B cell (primary cell): ENCODE measurements at regions of chr11 and their contacts with region 1.

Region 1: DNA sequence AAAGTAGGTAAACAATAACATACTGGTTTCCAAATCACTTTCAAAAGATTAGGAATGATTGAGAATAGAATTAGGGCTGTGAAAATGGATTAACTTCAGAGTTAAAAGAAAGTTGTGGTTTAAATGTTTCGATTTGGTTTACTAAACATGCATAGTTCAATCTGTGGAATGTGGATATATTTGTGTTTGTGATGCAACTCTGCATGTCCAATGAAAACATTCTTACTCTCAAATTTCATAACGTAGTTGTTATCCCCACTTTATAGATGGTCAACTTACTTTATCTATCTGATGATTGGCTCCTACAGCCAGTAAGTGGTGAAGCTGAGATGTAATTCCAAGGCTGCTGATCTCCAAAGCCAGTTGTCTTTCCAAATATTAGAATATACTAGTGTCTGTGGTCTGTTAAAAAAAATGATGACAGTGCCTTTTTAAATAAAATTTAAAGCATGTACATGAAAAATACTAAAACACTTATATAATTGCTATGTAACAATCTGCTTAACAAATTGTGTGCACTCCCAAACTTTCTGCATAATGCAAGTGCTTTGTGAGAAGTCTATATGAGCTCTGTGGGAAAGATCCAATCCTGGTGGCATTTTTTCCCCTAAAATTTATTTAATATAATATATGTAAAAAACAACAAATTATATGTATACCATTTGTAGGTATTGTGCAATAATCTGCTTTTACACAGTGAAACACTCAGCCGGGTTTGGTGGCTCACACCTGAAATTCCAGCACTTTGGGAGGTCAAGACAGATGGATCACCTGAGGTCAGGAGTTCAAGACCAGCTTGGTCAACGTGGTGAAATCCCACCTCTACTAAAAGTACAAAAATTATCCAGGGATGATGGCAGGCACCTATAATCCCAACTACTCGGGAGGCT is 9.7 kb upstream of the SIK3 start:
- DNase-seq: no peak
- ATAC-seq: no peak
- H3K4me3 ChIP-seq: no peak overlapping the region
- H3K4me3 Mint-ChIP-seq: no peak overlapping the region
- H3K27ac ChIP-seq: no peak overlapping the region
- H3K27ac Mint-ChIP-seq: no peak overlapping the region
- H3K4me1 ChIP-seq: peaks cover 0 to 6% of the 10 kb centered on the region in 2 donors
- H3K4me1 Mint-ChIP-seq: peaks cover 7% of the 10 kb centered on the region
- H3K27me3 ChIP-seq: no peaks in the 10 kb centered on the region
- H3K27me3 Mint-ChIP-seq: no peaks in the 10 kb centered on the region
- CTCF ChIP-seq: no peak

Region 2: GRCh38 chr11:116715383-116715782 is 392.6 kb before region 1 on chr11:
- CTCF ChIA-PET with region 1: no interaction called
- POLR2A ChIA-PET with region 1: no interaction called
- intact Hi-C with region 1: no loop called
- DNase-seq: no peak
- ATAC-seq: no peak
- H3K4me3 ChIP-seq: no peak overlapping the region
- H3K4me3 Mint-ChIP-seq: no peak overlapping the region
- H3K27ac ChIP-seq: no peak overlapping the region
- H3K27ac Mint-ChIP-seq: no peak overlapping the region
- H3K4me1 ChIP-seq: no peaks in the 10 kb centered on the region
- H3K4me1 Mint-ChIP-seq: no peaks in the 10 kb centered on the region
- H3K27me3 ChIP-seq: peaks cover 0 to 14% (median 0%) of the 10 kb centered on the region in 4 experiments
- H3K27me3 Mint-ChIP-seq: peaks cover 20% of the 10 kb centered on the region
- CTCF ChIP-seq: no peak

Region 3: DNA sequence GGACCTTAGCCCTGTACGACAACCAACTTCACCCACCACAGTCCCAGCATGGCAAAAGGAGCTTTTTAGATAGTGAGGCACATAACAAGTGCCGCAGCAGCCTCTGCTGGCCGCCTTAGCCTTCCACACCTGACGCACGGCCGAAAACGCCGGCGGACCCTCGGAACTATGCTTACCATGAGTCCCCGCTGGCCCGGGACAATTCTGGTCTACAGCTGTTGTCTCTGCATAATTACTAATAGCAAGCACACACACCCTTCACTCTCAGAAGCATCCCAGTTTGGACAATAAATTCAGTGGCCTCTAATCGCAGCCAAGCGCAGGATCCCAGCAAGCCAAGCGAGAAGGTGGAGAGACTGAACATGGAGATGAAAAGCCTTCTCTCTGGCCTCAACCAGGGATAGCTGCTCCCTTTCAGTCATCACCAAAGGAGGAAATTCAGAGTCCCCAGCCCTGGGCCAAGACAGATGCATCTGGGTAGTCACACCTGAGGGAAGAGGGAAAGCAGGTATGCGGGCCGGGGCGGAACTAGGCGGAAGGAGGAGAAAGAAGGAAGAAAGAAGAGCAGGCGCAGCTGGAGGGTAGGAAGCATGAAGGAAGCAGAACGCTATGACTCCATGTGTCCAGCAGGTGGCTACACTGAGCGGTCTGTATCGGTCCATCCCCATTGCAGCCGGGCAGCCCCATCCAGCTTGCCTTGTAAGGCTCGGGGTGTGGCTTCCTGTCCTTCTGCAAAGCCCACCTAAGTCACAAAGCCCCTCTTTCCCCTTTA is 375.5 kb before region 1 on chr11:
- CTCF ChIA-PET with region 1: interaction called, 14 read pairs
- POLR2A ChIA-PET with region 1: no interaction called
- intact Hi-C with region 1: no loop called
- DNase-seq: peak; percentile 66
- ATAC-seq: peak; percentile 93
- H3K4me3 ChIP-seq: no peak overlapping the region
- H3K4me3 Mint-ChIP-seq: peak overlapping the region; percentile 62
- H3K27ac ChIP-seq: no peak overlapping the region
- H3K27ac Mint-ChIP-seq: no peak overlapping the region
- H3K4me1 ChIP-seq: peaks cover 0 to 12% of the 10 kb centered on the region in 2 donors
- H3K4me1 Mint-ChIP-seq: peaks cover 15% of the 10 kb centered on the region
- H3K27me3 ChIP-seq: no peaks in the 10 kb centered on the region
- H3K27me3 Mint-ChIP-seq: no peaks in the 10 kb centered on the region
- CTCF ChIP-seq: peak; percentile 86

Region 4: DNA sequence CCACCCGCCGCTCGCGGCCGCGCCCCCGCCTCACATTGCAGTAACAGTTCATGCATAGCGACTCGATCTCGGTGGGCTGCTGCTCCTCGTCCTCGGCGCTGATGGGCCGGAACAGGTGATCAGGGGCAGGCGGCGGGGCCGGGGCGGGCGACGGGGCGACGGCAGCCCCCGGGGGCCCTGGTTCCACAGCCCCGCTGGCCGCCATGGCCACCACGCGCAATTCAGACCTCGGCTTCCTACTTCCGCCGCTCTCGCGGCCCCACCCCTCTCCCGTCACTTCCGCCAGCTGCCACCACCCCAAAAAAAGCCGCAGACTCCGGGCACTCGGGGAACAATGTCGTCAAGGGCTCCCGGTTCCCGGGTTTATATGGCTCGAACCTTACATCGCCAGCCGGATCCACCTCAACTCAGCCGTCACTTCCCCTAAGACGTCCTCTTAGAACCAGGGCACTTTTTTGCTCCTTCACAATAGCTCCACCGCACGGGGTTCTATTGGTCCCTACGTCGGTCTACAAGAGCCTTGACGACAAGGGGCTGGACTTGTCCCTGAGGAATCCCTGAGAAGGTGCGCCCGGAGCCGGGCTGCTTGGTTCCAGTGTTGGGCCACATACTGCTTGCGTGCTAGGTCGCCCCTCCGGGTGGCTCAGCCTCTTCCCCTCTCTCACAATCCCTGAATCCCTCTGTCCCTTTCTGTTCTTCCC is 320.0 kb before region 1 on chr11 and contains the start of gene ZPR1:
- CTCF ChIA-PET with region 1: interaction called, 80 read pairs
- POLR2A ChIA-PET with region 1: no interaction called
- intact Hi-C with region 1: no loop called
- DNase-seq: peak; percentile 88
- ATAC-seq: peak; percentile 83
- H3K4me3 ChIP-seq: peak within 1 kb of the TSS; percentile 69 to 88 (median 81)
- H3K4me3 Mint-ChIP-seq: peak within 1 kb of the TSS; percentile 98
- H3K27ac ChIP-seq: peak within 1 kb of the TSS; percentile 47 to 82
- H3K27ac Mint-ChIP-seq: peak within 1 kb of the TSS; percentile 98
- H3K4me1 ChIP-seq: peaks cover 22 to 29% of the 10 kb centered on the region in 2 donors
- H3K4me1 Mint-ChIP-seq: peaks cover 37% of the 10 kb centered on the region
- H3K27me3 ChIP-seq: peaks cover 0 to 10% (median 0%) of the 10 kb centered on the region in 4 experiments
- H3K27me3 Mint-ChIP-seq: peaks cover 7% of the 10 kb centered on the region
- CTCF ChIP-seq: no peak
- total RNA-seq, gene ZPR1: 63.1 and 63.7 TPM in 2 replicates

Region 5: DNA sequence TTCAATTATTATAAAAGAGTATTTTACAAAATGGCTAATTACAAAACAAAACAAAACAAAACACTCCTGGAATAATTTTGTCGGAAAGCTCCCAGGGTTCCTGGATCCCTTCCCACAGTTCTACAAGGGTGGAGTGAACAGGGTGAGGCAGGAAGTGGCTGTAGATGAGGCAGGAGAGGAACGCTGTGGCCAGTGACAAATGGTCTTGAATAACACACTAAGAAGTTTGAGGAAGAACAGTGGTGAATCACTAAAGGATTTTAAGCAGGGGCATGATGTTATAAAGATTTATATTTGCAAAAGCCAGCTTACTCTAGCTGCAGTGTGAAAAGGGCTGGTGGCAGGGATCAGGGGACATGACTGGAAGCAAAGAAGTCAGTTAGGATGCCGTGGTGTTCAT is 236.7 kb before region 1 on chr11:
- CTCF ChIA-PET with region 1: interaction called, 19 read pairs
- POLR2A ChIA-PET with region 1: no interaction called
- intact Hi-C with region 1: no loop called
- DNase-seq: no peak
- ATAC-seq: no peak
- H3K4me3 ChIP-seq: no peak overlapping the region
- H3K4me3 Mint-ChIP-seq: no peak overlapping the region
- H3K27ac ChIP-seq: no peak overlapping the region
- H3K27ac Mint-ChIP-seq: no peak overlapping the region
- H3K4me1 ChIP-seq: no peaks in the 10 kb centered on the region
- H3K4me1 Mint-ChIP-seq: no peaks in the 10 kb centered on the region
- H3K27me3 ChIP-seq: no peaks in the 10 kb centered on the region
- H3K27me3 Mint-ChIP-seq: no peaks in the 10 kb centered on the region
- CTCF ChIP-seq: no peak

Region 6: GRCh38 chr11:116895048-116895757 is 212.7 kb before region 1 on chr11:
- CTCF ChIA-PET with region 1: interaction called, 39 read pairs
- POLR2A ChIA-PET with region 1: no interaction called
- intact Hi-C with region 1: loop called (anchors 1 kb)
- DNase-seq: peak; percentile 64
- ATAC-seq: peak; percentile 63
- H3K4me3 ChIP-seq: no peak overlapping the region
- H3K4me3 Mint-ChIP-seq: no peak overlapping the region
- H3K27ac ChIP-seq: peak overlapping the region in 1 of 2 donors; percentile 51
- H3K27ac Mint-ChIP-seq: peak overlapping the region; percentile 34
- H3K4me1 ChIP-seq: peaks cover 0 to 5% of the 10 kb centered on the region in 2 donors
- H3K4me1 Mint-ChIP-seq: peaks cover 13% of the 10 kb centered on the region
- H3K27me3 ChIP-seq: no peaks in the 10 kb centered on the region
- H3K27me3 Mint-ChIP-seq: no peaks in the 10 kb centered on the region
- CTCF ChIP-seq: peak; percentile 20

Region 7: GRCh38 chr11:116927163-116927974 is 180.6 kb before region 1 on chr11:
- CTCF ChIA-PET with region 1: interaction called, 11 read pairs
- POLR2A ChIA-PET with region 1: no interaction called
- intact Hi-C with region 1: no loop called
- DNase-seq: peak; percentile 81
- ATAC-seq: peak; percentile 44
- H3K4me3 ChIP-seq: peak overlapping the region in 3 of 5 experiments; percentile 24 to 54 (median 32)
- H3K4me3 Mint-ChIP-seq: peak overlapping the region; percentile 79
- H3K27ac ChIP-seq: peak overlapping the region; percentile 95 to 96
- H3K27ac Mint-ChIP-seq: peak overlapping the region; percentile 95
- H3K4me1 ChIP-seq: peaks cover 86 to 91% of the 10 kb centered on the region in 2 donors
- H3K4me1 Mint-ChIP-seq: peaks cover 79% of the 10 kb centered on the region
- H3K27me3 ChIP-seq: no peaks in the 10 kb centered on the region
- H3K27me3 Mint-ChIP-seq: no peaks in the 10 kb centered on the region
- CTCF ChIP-seq: peak; percentile 79